ENCODE measurements at regions of chr11 and their contacts with region 1.

Region 1: GRCh38 chr11:62394825-62395538 is 23.9 kb upstream of the SCGB1A1 start:
- DNase-seq: peak; percentile 57 to 90 (median 66)
- ATAC-seq: peak; percentile 74
- H3K4me3 ChIP-seq: no peak overlapping the region
- H3K27ac ChIP-seq: no peak overlapping the region
- H3K4me1 ChIP-seq: peaks cover 55 to 66% of the 10 kb centered on the region in 2 experiments
- H3K27me3 ChIP-seq: no peaks in the 10 kb centered on the region
- CTCF ChIP-seq: peak; percentile 74 to 89 (median 86)
- EP300 ChIP-seq: no peak
- POLR2A ChIP-seq: no peak
- RAD21 ChIP-seq: peak; percentile 86 to 94

Region 2: DNA sequence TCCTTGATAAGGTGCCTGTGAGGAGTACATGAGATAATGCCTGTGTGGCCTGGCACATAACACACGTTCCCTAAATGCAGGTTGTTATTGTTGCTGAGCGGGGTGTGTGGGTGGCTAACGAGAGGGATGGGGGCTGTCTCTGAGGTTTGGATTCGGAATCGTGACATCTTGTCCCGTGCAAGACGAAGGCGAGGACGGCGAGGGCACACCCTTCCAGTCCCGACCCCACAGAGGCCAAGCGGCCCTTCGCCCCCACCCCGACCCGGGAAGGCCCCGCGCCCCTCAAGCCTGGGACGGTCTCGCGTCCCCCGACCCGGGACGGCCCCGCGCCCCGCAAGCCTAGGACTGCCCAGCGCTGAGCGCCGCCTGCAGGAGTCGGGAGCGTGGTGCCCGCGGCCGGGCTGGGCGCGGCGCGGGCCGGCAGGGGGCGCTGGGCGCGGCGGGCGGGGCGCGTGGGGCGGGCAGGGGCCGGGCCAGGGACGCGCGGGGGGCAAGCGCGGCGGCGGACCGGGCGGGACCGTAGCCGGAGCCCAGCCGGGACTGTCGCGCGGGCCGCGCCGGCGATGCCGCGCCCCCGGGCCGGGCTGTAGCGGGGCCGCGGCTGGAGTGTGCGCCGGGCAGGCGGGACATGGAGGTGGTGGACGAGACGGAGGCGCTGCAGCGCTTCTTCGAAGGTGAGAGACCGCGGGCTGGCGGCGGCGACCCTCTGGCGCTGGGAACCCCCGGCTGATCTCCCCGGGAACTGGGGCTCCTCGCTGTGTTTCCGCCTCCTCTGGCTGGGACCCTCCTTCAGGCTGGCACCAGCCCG is 642.7 kb before region 1 on chr11 and contains the start of gene MYRF:
- CTCF ChIA-PET with region 1: no interaction called
- POLR2A ChIA-PET with region 1: no interaction called
- in situ Hi-C with region 1: no loop called
- intact Hi-C with region 1: no loop called
- DNase-seq: peak; percentile 79 to 88 (median 85)
- ATAC-seq: peak; percentile 55
- H3K4me3 ChIP-seq: peak within 1 kb of the TSS; percentile 56
- H3K27ac ChIP-seq: peak within 1 kb of the TSS; percentile 63
- H3K4me1 ChIP-seq: peaks cover 84 to 93% of the 10 kb centered on the region in 2 experiments
- H3K27me3 ChIP-seq: no peaks in the 10 kb centered on the region
- CTCF ChIP-seq: peak; percentile 42 to 96 (median 87)
- EP300 ChIP-seq: no peak
- POLR2A ChIP-seq: no peak
- RAD21 ChIP-seq: peak in 1 of 2 experiments; percentile 53; a peak in 3 of 4 replicates
- polyA plus RNA-seq, gene MYRF: 2.3 TPM

Region 3: GRCh38 chr11:62427630-62428233 is 32.8 kb after region 1 on chr11:
- CTCF ChIA-PET with region 1: interaction called, 3 read pairs
- POLR2A ChIA-PET with region 1: interaction called, 3 read pairs
- in situ Hi-C with region 1: no loop called
- intact Hi-C with region 1: loop called (anchors 2 kb)
- DNase-seq: no peak
- ATAC-seq: no peak
- H3K4me3 ChIP-seq: no peak overlapping the region
- H3K27ac ChIP-seq: peak overlapping the region; percentile 37; the same call in 2 of the 3 replicates
- H3K4me1 ChIP-seq: peaks cover 16 to 30% of the 10 kb centered on the region in 2 experiments
- H3K27me3 ChIP-seq: no peaks in the 10 kb centered on the region
- CTCF ChIP-seq: no peak
- EP300 ChIP-seq: no peak; the same call in 1 of the 2 replicates
- POLR2A ChIP-seq: no peak
- RAD21 ChIP-seq: peak in 1 of 2 experiments; percentile 16; a peak in 1 of 4 replicates

Region 4: GRCh38 chr11:62556108-62556871 is 161.3 kb after region 1 on chr11:
- CTCF ChIA-PET with region 1: interaction called, 48 read pairs
- POLR2A ChIA-PET with region 1: interaction called, 9 read pairs
- in situ Hi-C with region 1: loop called (anchors 10 kb)
- intact Hi-C with region 1: loop called (anchors 1 kb)
- DNase-seq: peak; percentile 56 to 79 (median 69)
- ATAC-seq: peak; percentile 54
- H3K4me3 ChIP-seq: no peak overlapping the region
- H3K27ac ChIP-seq: peak overlapping the region; percentile 73
- H3K4me1 ChIP-seq: peaks cover 65 to 72% of the 10 kb centered on the region in 2 experiments
- H3K27me3 ChIP-seq: no peaks in the 10 kb centered on the region
- CTCF ChIP-seq: no peak
- EP300 ChIP-seq: no peak; the same call in 1 of the 2 replicates
- POLR2A ChIP-seq: no peak
- RAD21 ChIP-seq: no peak; a peak in 1 of 4 replicates

Region 5: DNA sequence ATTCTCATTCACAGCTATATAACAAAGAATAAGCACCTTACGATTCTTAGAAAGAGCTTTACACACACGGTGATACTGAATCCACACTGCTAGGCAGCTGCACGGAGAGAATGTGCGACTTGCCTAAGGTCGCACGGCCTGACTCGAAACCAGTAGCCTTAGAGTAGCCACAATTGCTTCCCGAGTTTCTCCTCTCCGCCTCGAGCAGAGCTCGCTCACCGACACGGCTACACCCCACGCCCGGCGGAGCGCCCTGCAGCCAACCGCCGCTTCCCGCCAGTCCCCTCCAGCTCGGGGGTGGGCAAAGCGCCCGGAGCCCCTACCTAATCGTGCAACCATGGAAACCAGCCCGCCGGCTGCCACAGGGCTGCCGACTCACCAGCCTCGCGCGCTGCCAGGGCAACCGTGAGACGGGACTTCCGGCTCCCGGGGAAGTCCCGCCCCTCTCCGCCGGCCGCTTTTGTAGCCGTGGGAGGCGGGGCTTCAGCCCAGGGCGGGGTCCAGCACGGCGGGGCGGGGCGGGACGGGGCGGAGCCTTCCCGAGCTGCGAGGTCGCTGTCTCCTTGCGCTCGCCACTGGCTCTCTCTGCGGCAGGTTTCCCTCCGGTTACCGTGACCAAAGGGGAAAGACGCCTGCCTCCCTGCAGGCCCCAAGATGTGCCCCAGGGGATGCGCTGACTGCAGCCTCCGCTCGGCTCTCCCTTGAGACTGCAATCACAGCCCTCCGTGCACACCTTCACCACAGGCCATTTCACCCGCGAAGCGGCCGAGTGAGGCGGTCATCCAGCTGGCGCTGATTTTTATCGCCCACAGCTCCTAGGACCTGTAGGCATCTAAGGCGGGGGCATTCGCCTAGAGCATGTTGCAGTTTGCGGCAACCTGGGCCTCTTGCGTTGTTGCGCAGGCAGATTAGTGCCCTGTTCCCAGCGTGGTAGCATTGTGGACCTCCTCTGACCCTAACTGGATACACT is 311.2 kb after region 1 on chr11:
- CTCF ChIA-PET with region 1: no interaction called
- POLR2A ChIA-PET with region 1: no interaction called
- in situ Hi-C with region 1: no loop called
- intact Hi-C with region 1: loop called (anchors 5 kb)
- DNase-seq: peak; percentile 93 to 97 (median 96)
- ATAC-seq: peak; percentile 95
- H3K4me3 ChIP-seq: peak overlapping the region; percentile 72
- H3K27ac ChIP-seq: peak overlapping the region; percentile 82
- H3K4me1 ChIP-seq: peaks cover 29 to 42% of the 10 kb centered on the region in 2 experiments
- H3K27me3 ChIP-seq: no peaks in the 10 kb centered on the region
- CTCF ChIP-seq: no peak
- EP300 ChIP-seq: no peak
- POLR2A ChIP-seq: peak; percentile 79
- RAD21 ChIP-seq: no peak

Region 6: GRCh38 chr11:62855571-62856332 is 460.8 kb after region 1 on chr11:
- CTCF ChIA-PET with region 1: no interaction called
- POLR2A ChIA-PET with region 1: interaction called, 3 read pairs
- in situ Hi-C with region 1: loop called (anchors 25 kb)
- intact Hi-C with region 1: loop called (anchors 5 kb)
- DNase-seq: peak; percentile 92 to 99 (median 96)
- ATAC-seq: peak; percentile 77
- H3K4me3 ChIP-seq: peak overlapping the region; percentile 74
- H3K27ac ChIP-seq: peak overlapping the region; percentile 99
- H3K4me1 ChIP-seq: peaks cover 5 to 21% of the 10 kb centered on the region in 2 experiments; a peak in 3 of 5 replicates
- H3K27me3 ChIP-seq: no peaks in the 10 kb centered on the region
- CTCF ChIP-seq: no peak
- EP300 ChIP-seq: peak; percentile 38; the same call in 1 of the 2 replicates
- POLR2A ChIP-seq: peak; percentile 100
- RAD21 ChIP-seq: no peak; a peak in 1 of 4 replicates

Measured in K562 (cell line).